PC-9 (cell line): ENCODE measurements at regions of chr16 and their contacts with region 1.

Region 1: DNA sequence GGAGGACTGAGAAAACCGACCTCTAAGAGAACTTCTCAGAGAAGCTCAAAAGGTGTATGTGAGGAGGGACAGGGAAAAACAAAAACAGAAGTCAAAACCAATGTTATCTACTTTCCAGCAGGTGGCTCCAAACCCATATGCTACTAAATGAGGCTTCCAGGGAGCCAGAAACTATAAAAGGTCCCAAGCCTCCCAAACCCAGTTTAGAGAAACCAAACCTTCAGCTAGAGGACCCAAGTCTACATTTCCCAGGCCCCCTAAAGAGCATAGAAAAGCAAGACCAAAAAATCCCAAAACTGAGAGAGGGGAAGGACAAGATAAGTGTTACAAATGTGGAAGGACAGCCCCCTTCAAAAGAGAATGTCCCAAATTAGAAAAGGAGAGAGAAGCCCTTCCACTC is 3.7 kb downstream of the HPR start:
- DNase-seq: peak in 1 of 2 experiments; percentile 2
- H3K4me3 ChIP-seq: no peak overlapping the region
- H3K27ac ChIP-seq: no peak overlapping the region
- H3K4me1 ChIP-seq: no peaks in the 10 kb centered on the region
- H3K27me3 ChIP-seq: peaks cover 23% of the 10 kb centered on the region; the same call in 1 of the 2 replicates
- CTCF ChIP-seq: peak; percentile 74

Region 2: DNA sequence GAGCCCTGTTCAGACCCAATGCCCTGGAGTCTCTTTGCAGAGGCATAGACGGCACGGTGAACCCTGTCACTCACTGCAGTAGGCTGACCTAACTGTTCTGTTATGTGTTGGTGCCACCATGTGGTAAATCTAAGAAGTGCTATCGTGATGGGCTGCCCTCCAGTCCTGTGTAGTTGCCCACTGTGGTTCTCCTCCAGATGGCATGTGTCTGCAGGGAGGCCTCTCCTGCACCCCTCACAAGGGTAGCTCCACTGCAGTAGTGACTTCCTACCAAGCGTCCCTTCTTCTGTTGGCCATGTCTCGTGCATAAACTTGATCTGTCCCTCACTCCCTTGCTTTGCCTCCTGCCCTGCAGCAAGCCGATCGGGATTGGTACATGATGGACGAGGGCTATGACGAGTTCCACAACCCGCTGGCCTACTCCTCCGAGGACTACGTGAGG is 32.7 kb after region 1 on chr16:
- CTCF ChIA-PET with region 1: interaction called, 6 read pairs
- POLR2A ChIA-PET with region 1: no interaction called
- intact Hi-C with region 1: loop called (anchors 1 kb)
- DNase-seq: peak in 1 of 2 experiments; percentile 39
- H3K4me3 ChIP-seq: no peak overlapping the region
- H3K27ac ChIP-seq: no peak overlapping the region
- H3K4me1 ChIP-seq: peaks cover 11% of the 10 kb centered on the region
- H3K27me3 ChIP-seq: no peaks in the 10 kb centered on the region
- CTCF ChIP-seq: peak; percentile 76

Region 3: DNA sequence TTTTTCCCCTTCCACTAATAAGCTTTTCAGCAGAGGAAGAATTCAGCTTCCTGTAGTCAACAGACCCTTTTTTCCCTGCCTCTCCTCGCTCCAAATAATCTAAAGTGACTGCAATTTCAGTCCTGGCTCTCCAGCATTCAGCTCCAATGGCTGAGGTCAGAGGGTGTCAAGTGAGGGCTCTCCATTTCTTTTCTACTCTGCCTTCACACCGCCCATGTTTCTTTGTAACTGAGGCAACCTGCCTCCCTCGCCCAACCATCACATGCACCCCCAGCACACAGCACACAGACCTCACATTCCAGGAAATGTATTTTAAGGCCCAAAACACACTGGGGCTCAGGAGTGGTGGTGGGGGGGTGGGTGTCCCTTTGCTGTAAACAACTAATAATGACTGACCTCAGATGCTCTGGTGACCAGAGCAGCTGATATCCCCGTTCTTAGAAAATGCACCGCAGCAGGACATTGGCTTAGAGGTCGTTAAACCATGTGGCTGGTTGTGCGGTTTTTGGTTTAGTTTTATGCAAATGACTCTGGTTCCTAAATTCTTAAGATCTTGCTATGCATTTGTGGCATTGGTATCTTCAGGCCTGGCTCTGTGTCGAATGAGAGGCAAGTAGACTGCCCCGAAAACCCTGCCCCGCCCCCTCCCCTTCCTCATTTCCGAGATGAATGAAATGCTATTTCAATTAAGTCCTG is 777.6 kb after region 1 on chr16:
- CTCF ChIA-PET with region 1: no interaction called
- POLR2A ChIA-PET with region 1: no interaction called
- intact Hi-C with region 1: no loop called
- DNase-seq: no peak
- H3K4me3 ChIP-seq: no peak overlapping the region
- H3K27ac ChIP-seq: no peak overlapping the region
- H3K4me1 ChIP-seq: peaks cover 16% of the 10 kb centered on the region
- H3K27me3 ChIP-seq: no peaks in the 10 kb centered on the region
- CTCF ChIP-seq: no peak